CD8-positive, alpha-beta T cell (primary cell): ENCODE measurements at regions of chr14 and their contacts with region 1.

Region 1: GRCh38 chr14:103078093-103078749 is 5.8 kb upstream of the LBHD2 start:
- DNase-seq: peak; percentile 44 to 88 (median 76)
- ATAC-seq: peak; percentile 81
- H3K4me3 ChIP-seq: no peak overlapping the region
- H3K4me3 Mint-ChIP-seq: no peak overlapping the region
- H3K27ac ChIP-seq: no peak overlapping the region
- H3K27ac Mint-ChIP-seq: no peak overlapping the region
- H3K4me1 ChIP-seq: peaks cover 9% of the 10 kb centered on the region
- H3K4me1 Mint-ChIP-seq: peaks cover 2% of the 10 kb centered on the region
- H3K27me3 ChIP-seq: peaks cover 0 to 9% of the 10 kb centered on the region in 2 experiments
- H3K27me3 Mint-ChIP-seq: no peaks in the 10 kb centered on the region
- CTCF ChIP-seq: peak; percentile 69

Region 2: DNA sequence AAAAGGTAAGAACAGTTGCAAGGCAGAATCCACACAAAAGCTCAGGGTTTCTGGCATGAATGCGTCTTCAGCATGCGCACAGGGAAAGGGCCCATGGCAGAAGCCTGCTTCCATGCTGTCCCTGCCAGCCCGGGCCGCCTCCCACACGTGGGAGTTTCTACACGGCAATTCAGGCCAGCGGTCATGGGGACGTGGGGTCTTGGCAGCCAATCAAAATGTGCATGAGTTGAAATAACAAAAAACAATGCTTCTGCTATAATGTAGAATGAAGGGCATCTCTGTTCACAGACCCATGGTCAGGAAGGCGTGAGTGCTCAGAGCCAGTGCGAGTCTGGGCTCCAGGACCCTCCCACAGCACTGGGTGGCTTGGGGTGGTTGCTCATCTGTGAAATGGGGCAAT is 127.2 kb before region 1 on chr14:
- CTCF ChIA-PET with region 1: no interaction called
- POLR2A ChIA-PET with region 1: no interaction called
- intact Hi-C with region 1: no loop called
- DNase-seq: no peak
- ATAC-seq: no peak
- H3K4me3 ChIP-seq: no peak overlapping the region
- H3K4me3 Mint-ChIP-seq: no peak overlapping the region
- H3K27ac ChIP-seq: no peak overlapping the region
- H3K27ac Mint-ChIP-seq: no peak overlapping the region
- H3K4me1 ChIP-seq: peaks cover 26% of the 10 kb centered on the region
- H3K4me1 Mint-ChIP-seq: peaks cover 26% of the 10 kb centered on the region
- H3K27me3 ChIP-seq: no peaks in the 10 kb centered on the region
- H3K27me3 Mint-ChIP-seq: no peaks in the 10 kb centered on the region
- CTCF ChIP-seq: no peak

Region 3: DNA sequence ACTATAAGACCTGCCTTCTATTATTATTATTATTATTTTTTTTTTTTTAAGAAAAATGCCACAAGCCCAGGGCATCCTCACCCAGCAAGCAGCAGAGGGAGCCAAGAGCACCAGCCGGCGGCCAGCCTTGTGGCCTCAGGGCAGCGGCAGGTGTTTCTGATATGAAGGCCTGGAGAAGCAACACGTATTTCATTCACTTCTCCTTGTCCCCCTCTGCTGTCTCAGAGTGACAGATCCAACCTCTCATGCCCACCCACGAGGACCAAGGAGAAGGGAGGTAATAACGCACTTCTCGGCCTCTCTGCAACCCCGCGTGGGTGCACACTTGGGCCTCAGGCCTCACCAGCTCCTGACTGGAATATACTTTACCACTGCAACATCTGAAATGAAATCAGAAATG is 46.3 kb before region 1 on chr14:
- CTCF ChIA-PET with region 1: no interaction called
- POLR2A ChIA-PET with region 1: no interaction called
- intact Hi-C with region 1: no loop called
- DNase-seq: no peak
- ATAC-seq: no peak
- H3K4me3 ChIP-seq: no peak overlapping the region
- H3K4me3 Mint-ChIP-seq: no peak overlapping the region
- H3K27ac ChIP-seq: no peak overlapping the region
- H3K27ac Mint-ChIP-seq: no peak overlapping the region
- H3K4me1 ChIP-seq: no peaks in the 10 kb centered on the region
- H3K4me1 Mint-ChIP-seq: no peaks in the 10 kb centered on the region
- H3K27me3 ChIP-seq: peaks cover 0 to 2% of the 10 kb centered on the region in 2 experiments
- H3K27me3 Mint-ChIP-seq: peaks cover 3% of the 10 kb centered on the region
- CTCF ChIP-seq: no peak

Region 4: GRCh38 chr14:103091041-103091882 is 13.0 kb after region 1 on chr14:
- CTCF ChIA-PET with region 1: interaction called, 15 read pairs
- POLR2A ChIA-PET with region 1: interaction called, 4 read pairs
- intact Hi-C with region 1: loop called (anchors 1 kb)
- DNase-seq: peak; percentile 58 to 87 (median 80)
- ATAC-seq: peak; percentile 94
- H3K4me3 ChIP-seq: peak overlapping the region; percentile 26 to 50
- H3K4me3 Mint-ChIP-seq: peak overlapping the region; percentile 63
- H3K27ac ChIP-seq: no peak overlapping the region
- H3K27ac Mint-ChIP-seq: no peak overlapping the region
- H3K4me1 ChIP-seq: peaks cover 11% of the 10 kb centered on the region
- H3K4me1 Mint-ChIP-seq: peaks cover 6% of the 10 kb centered on the region
- H3K27me3 ChIP-seq: no peaks in the 10 kb centered on the region
- H3K27me3 Mint-ChIP-seq: peaks cover 2% of the 10 kb centered on the region
- CTCF ChIP-seq: peak; percentile 68

Region 5: DNA sequence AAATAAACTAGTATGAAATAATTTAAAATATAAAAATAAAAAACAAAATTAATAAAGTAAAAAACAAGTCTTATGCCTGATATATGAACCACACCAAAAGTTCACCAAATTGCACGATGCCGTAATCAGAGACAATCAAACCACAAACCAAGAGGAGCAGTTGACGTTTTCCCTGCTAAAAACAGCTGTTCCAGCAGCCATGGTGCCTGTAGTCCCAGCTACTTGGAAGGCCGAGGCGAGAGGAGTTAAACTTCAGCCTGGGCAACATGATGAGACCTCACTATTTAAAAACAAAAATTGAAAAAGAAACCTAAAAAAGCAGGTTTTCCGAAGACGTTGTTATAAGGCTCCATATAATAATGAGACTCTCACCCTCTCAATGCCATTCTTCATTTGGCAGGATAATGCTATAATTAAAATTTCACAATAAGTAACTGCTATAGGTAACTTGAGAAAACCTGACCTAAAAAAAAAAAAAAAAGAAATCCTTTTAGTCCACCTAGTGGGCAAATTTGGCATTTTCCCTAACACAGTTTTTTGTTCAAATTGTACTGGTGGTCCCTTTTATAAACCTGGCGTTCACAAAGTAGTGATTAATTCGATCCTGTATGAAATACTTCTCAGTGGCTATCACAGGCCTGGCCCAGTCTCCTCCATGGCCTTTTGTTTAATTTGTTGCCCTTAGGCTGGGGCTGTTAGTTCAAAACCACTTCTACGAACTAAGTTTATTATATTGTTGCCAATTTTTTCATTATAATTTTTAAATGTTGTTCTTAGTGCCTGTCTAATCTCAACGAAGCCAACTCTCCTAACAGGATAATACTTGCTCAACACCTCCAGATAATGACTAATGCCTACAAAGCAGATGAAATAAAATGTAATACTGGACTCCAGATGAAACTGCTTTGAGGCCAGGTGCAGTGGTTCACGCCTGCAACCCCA is 107.1 kb after region 1 on chr14:
- CTCF ChIA-PET with region 1: no interaction called
- POLR2A ChIA-PET with region 1: no interaction called
- intact Hi-C with region 1: loop called in 1 of 2 experiments (anchors 10 kb)
- DNase-seq: peak in 2 of 9 experiments; percentile 32 to 49
- ATAC-seq: no peak
- H3K4me3 ChIP-seq: no peak overlapping the region
- H3K4me3 Mint-ChIP-seq: no peak overlapping the region
- H3K27ac ChIP-seq: no peak overlapping the region
- H3K27ac Mint-ChIP-seq: no peak overlapping the region
- H3K4me1 ChIP-seq: peaks cover 6% of the 10 kb centered on the region
- H3K4me1 Mint-ChIP-seq: peaks cover 11% of the 10 kb centered on the region
- H3K27me3 ChIP-seq: peaks cover 0 to 4% of the 10 kb centered on the region in 2 experiments
- H3K27me3 Mint-ChIP-seq: peaks cover 48% of the 10 kb centered on the region
- CTCF ChIP-seq: peak; percentile 72

Region 6: DNA sequence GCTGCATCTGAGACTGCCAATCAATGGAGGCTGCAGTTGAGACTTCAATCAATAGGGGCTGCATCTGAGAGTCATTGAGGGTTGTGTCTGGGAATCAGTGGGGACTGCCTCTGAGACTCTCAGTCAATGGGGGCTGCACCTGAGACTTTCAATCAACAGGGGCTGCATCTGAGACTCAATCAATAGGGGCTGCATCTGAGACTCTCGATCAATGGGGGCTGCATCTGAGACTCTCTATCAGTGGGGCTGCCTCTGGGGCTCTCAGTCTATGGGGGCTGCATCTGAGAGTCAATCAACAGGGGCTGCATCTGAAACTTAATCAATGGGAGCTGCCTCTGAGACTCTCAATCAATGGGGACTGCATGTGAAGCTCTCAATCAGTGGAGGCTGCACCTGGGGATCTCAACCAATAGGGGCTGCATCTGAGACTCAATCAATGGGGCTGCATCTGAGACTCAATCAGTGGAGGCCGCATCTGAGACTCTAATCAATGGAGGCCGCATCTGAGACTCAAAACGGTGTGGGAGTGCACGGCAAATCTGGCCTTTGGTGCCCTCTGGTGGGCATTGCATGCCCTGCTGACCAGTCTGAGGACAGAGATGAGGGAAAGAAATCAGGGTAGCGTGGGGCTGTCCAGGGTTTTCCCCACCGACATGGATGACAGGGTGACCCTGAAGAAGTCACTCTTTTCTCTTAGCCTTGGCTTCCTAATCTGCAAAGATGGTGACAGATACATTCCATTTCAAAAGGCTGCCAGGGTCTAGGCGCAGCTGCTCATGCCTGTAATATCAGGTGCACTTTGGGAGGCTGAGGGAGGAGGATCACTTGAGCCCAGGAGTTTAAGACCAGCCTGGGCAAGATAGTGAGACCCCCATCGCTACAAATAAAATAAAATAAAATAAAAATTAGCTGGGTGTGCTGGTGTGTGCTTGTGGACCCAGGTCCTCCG is 214.5 kb after region 1 on chr14:
- CTCF ChIA-PET with region 1: interaction called, 4 read pairs
- POLR2A ChIA-PET with region 1: no interaction called
- intact Hi-C with region 1: loop called (anchors 2 to 10 kb)
- DNase-seq: peak; percentile 39 to 82 (median 73)
- ATAC-seq: peak; percentile 86
- H3K4me3 ChIP-seq: no peak overlapping the region
- H3K4me3 Mint-ChIP-seq: no peak overlapping the region
- H3K27ac ChIP-seq: no peak overlapping the region
- H3K27ac Mint-ChIP-seq: no peak overlapping the region
- H3K4me1 ChIP-seq: no peaks in the 10 kb centered on the region
- H3K4me1 Mint-ChIP-seq: no peaks in the 10 kb centered on the region
- H3K27me3 ChIP-seq: peaks cover 0 to 2% of the 10 kb centered on the region in 2 experiments
- H3K27me3 Mint-ChIP-seq: peaks cover 15% of the 10 kb centered on the region
- CTCF ChIP-seq: peak; percentile 80

Region 7: GRCh38 chr14:103910262-103910935 is 832.2 kb after region 1 on chr14:
- CTCF ChIA-PET with region 1: no interaction called
- POLR2A ChIA-PET with region 1: no interaction called
- intact Hi-C with region 1: no loop called
- DNase-seq: peak; percentile 59 to 86 (median 75)
- ATAC-seq: peak; percentile 76
- H3K4me3 ChIP-seq: peak overlapping the region; percentile 30 to 51
- H3K4me3 Mint-ChIP-seq: peak overlapping the region; percentile 73
- H3K27ac ChIP-seq: peak overlapping the region; percentile 21 to 45
- H3K27ac Mint-ChIP-seq: peak overlapping the region; percentile 89
- H3K4me1 ChIP-seq: peaks cover 28% of the 10 kb centered on the region
- H3K4me1 Mint-ChIP-seq: peaks cover 26% of the 10 kb centered on the region
- H3K27me3 ChIP-seq: no peaks in the 10 kb centered on the region
- H3K27me3 Mint-ChIP-seq: peaks cover 2% of the 10 kb centered on the region
- CTCF ChIP-seq: peak; percentile 79